CD4-positive, alpha-beta memory T cell (primary cell): ENCODE measurements at regions of chr5 and their contacts with region 1.

Region 1: DNA sequence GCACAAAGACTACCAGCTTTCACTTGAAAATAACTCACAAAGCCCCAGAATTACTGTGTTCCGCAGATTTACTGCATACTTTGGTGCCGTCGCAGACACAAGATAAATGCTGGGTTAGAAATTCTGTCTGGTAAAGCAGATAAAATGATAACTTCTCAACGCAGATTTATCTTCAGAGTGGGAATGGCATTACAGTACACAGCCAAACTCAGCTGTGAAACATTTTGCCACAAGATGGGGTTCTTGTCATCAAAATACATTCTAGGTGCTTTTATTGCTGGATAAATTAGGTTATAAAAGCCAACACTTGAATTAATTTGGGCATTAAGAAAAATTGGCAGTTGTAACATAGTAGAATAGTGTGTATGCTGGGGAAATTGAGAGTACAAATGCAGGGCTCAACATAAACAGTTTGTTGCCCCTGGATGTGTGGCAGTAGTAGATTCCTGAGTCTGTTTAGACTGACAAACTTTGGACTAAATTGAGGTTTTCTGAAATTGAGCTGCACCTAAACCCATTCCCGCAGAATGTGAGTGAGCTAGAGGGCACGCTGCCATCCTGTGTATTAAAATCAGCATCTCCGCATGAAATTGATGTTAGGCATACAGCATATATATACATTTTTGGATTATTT is 61.1 kb downstream of the LMNB1 start:
- DNase-seq: peak in 2 of 5 donors; percentile 10 to 11
- H3K4me3 ChIP-seq: no peak overlapping the region
- H3K4me3 Mint-ChIP-seq: no peak overlapping the region
- H3K27ac ChIP-seq: no peak overlapping the region
- H3K27ac Mint-ChIP-seq: no peak overlapping the region
- H3K4me1 ChIP-seq: no peaks in the 10 kb centered on the region
- H3K4me1 Mint-ChIP-seq: no peaks in the 10 kb centered on the region
- H3K27me3 ChIP-seq: no peaks in the 10 kb centered on the region
- H3K27me3 Mint-ChIP-seq: no peaks in the 10 kb centered on the region

Region 2: DNA sequence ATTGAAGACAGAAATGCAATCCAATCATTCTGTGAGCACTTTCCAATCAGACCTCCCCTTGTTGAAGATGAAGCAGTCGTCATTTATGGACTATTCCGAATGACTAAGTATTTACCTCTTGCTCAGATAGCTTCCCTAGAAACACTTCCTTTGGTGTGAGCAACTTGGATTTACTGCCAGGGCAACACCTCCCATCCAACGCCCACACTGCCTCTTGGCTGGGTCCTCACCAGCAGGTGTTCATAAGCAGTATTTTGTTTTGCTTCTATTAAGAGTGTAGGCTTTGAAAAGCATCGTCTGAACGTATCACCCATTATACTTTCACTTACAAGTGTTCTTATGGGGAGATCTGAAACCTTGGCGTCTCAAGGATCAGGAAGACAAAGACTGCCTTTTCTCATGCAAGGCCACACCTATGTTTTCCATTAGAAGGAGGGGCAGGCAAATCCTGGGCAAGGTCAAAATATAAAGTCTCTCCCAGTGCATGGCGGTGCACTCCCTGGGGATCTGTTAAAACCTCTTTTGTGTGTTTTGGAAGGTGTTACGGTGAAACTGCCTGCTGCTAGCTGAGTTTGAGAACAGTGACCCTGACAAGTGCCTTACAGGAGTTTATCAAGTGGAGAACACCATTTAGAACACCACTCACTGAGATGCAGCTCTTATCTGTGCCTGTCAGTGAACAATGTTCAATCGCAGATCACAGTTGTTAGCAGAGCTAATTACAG is 202.9 kb after region 1 on chr5:
- CTCF ChIA-PET with region 1: interaction called, 3 read pairs
- POLR2A ChIA-PET with region 1: no interaction called
- intact Hi-C with region 1: loop called (anchors 5 kb)
- DNase-seq: no peak
- H3K4me3 ChIP-seq: no peak overlapping the region
- H3K4me3 Mint-ChIP-seq: no peak overlapping the region
- H3K27ac ChIP-seq: no peak overlapping the region
- H3K27ac Mint-ChIP-seq: no peak overlapping the region
- H3K4me1 ChIP-seq: no peaks in the 10 kb centered on the region
- H3K4me1 Mint-ChIP-seq: no peaks in the 10 kb centered on the region
- H3K27me3 ChIP-seq: no peaks in the 10 kb centered on the region
- H3K27me3 Mint-ChIP-seq: no peaks in the 10 kb centered on the region

Region 3: GRCh38 chr5:127313847-127314473 is 475.9 kb after region 1 on chr5:
- CTCF ChIA-PET with region 1: interaction called, 31 read pairs
- POLR2A ChIA-PET with region 1: no interaction called
- intact Hi-C with region 1: loop called (anchors 1 kb)
- DNase-seq: peak in 4 of 5 donors; percentile 38 to 55 (median 54)
- H3K4me3 ChIP-seq: no peak overlapping the region
- H3K4me3 Mint-ChIP-seq: peak overlapping the region in 1 of 8 donors; percentile 50
- H3K27ac ChIP-seq: no peak overlapping the region
- H3K27ac Mint-ChIP-seq: peak overlapping the region in 1 of 7 donors; percentile 81
- H3K4me1 ChIP-seq: no peaks in the 10 kb centered on the region
- H3K4me1 Mint-ChIP-seq: peaks cover 0 to 4% (median under 1%) of the 10 kb centered on the region in 4 donors
- H3K27me3 ChIP-seq: no peaks in the 10 kb centered on the region
- H3K27me3 Mint-ChIP-seq: peaks cover 5 to 9% of the 10 kb centered on the region in 2 donors

Region 4: GRCh38 chr5:127492854-127493738 is 655.1 kb after region 1 on chr5:
- CTCF ChIA-PET with region 1: interaction called, 6 read pairs
- POLR2A ChIA-PET with region 1: no interaction called
- intact Hi-C with region 1: loop called (anchors 5 kb)
- DNase-seq: peak in 4 of 5 donors; percentile 38 to 54 (median 50)
- H3K4me3 ChIP-seq: no peak overlapping the region
- H3K4me3 Mint-ChIP-seq: no peak overlapping the region
- H3K27ac ChIP-seq: no peak overlapping the region
- H3K27ac Mint-ChIP-seq: no peak overlapping the region
- H3K4me1 ChIP-seq: no peaks in the 10 kb centered on the region
- H3K4me1 Mint-ChIP-seq: peaks cover 0 to 2% (median 0%) of the 10 kb centered on the region in 4 donors
- H3K27me3 ChIP-seq: no peaks in the 10 kb centered on the region
- H3K27me3 Mint-ChIP-seq: peaks cover 9 to 17% of the 10 kb centered on the region in 2 donors